ENCODE measurements at regions of chr1 and their contacts with region 1.

Region 1: GRCh38 chr1:5286244-5286643 is 631.8 kb downstream of the AJAP1 start:
- DNase-seq: peak; percentile 58
- H3K4me3 Mint-ChIP-seq: no peak overlapping the region
- H3K27ac Mint-ChIP-seq: no peak overlapping the region
- H3K4me1 Mint-ChIP-seq: no peaks in the 10 kb centered on the region
- H3K27me3 Mint-ChIP-seq: no peaks in the 10 kb centered on the region

Region 2: GRCh38 chr1:5448486-5448885 is 162.2 kb after region 1 on chr1:
- CTCF ChIA-PET with region 1: interaction called, 12 read pairs
- POLR2A ChIA-PET with region 1: no interaction called
- intact Hi-C with region 1: loop called (anchors 5 kb)
- DNase-seq: peak; percentile 46
- H3K4me3 Mint-ChIP-seq: no peak overlapping the region
- H3K27ac Mint-ChIP-seq: no peak overlapping the region
- H3K4me1 Mint-ChIP-seq: no peaks in the 10 kb centered on the region
- H3K27me3 Mint-ChIP-seq: no peaks in the 10 kb centered on the region

Region 3: GRCh38 chr1:5481889-5482288 is 195.6 kb after region 1 on chr1:
- CTCF ChIA-PET with region 1: interaction called, 4 read pairs
- POLR2A ChIA-PET with region 1: no interaction called
- intact Hi-C with region 1: loop called (anchors 2 kb)
- DNase-seq: peak; percentile 62
- H3K4me3 Mint-ChIP-seq: no peak overlapping the region
- H3K27ac Mint-ChIP-seq: no peak overlapping the region
- H3K4me1 Mint-ChIP-seq: peaks cover 4% of the 10 kb centered on the region
- H3K27me3 Mint-ChIP-seq: peaks cover 2% of the 10 kb centered on the region